SK-N-SH (cell line): ENCODE measurements at regions of chr2 and their contacts with region 1.

Region 1: GRCh38 chr2:27281855-27282559 is at the start of gene TRIM54:
- DNase-seq: no peak
- H3K4me3 ChIP-seq: no peak within 1 kb of the TSS
- H3K27ac ChIP-seq: no peak within 1 kb of the TSS
- H3K4me1 ChIP-seq: peaks cover 0 to 23% of the 10 kb centered on the region in 2 experiments; a peak in 3 of 4 replicates
- H3K27me3 ChIP-seq: peaks cover 12% of the 10 kb centered on the region; the same call in 1 of the 2 replicates
- CTCF ChIP-seq: no peak
- EP300 ChIP-seq: no peak
- RAD21 ChIP-seq: no peak
- polyA plus RNA-seq, gene TRIM54: 0.28 and 0.36 TPM in 2 replicates

Region 2: DNA sequence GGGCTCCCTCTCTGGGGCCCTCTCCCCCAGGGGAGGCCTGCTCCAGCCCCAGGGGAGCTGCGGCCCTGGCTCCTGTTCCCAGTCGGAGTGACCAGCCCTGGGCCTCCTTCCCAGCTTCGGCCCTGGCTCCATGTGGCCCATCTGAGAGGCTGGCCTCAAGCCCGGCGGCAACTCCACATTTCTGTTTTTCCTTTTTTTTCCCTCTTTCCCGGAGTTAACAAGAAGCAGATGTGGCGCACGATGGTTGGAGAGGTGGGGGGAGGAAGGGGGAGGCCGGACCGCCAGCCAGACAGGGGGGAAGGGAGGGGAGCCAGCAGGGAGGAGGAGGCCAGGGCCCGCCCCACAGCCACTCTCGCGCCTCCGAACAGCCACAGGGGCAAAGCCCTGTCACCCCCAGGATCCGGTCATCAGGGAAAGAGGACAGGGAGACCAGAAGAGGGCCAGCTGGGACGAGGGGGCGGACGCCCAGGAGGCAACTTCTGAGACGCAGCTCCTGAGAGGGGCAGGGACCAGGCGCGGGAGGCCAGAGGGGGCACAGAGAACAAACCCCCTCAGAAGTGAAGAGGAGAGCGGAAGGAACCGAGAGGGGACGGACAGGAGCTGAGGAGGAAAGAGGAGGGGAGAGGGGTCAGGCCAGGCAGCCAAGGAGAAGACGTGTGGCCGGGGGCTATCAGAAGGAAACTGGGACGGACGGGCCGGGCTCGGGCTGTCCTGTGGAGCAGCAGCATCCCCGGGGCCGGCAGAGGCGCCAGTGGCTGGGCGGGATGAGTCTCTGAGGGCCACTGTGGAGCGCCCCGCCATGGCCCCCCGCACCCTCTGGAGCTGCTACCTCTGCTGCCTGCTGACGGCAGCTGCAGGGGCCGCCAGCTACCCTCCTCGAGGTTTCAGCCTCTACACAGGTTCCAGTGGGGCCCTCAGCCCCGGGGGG is 203.5 kb before region 1 on chr2 and contains the start of gene EMILIN1:
- CTCF ChIA-PET with region 1: interaction called, 15 read pairs
- POLR2A ChIA-PET with region 1: no interaction called
- DNase-seq: peak; percentile 97
- H3K4me3 ChIP-seq: peak within 1 kb of the TSS; percentile 79 to 93
- H3K27ac ChIP-seq: peak within 1 kb of the TSS; percentile 79 to 99
- H3K4me1 ChIP-seq: peaks cover 36 to 76% of the 10 kb centered on the region in 2 experiments
- H3K27me3 ChIP-seq: no peaks in the 10 kb centered on the region
- CTCF ChIP-seq: peak; percentile 24
- EP300 ChIP-seq: peak; percentile 86 to 91; a peak in 3 of 4 replicates
- RAD21 ChIP-seq: peak; percentile 17
- polyA plus RNA-seq, gene EMILIN1: 184 and 286 TPM in 2 replicates

Region 3: DNA sequence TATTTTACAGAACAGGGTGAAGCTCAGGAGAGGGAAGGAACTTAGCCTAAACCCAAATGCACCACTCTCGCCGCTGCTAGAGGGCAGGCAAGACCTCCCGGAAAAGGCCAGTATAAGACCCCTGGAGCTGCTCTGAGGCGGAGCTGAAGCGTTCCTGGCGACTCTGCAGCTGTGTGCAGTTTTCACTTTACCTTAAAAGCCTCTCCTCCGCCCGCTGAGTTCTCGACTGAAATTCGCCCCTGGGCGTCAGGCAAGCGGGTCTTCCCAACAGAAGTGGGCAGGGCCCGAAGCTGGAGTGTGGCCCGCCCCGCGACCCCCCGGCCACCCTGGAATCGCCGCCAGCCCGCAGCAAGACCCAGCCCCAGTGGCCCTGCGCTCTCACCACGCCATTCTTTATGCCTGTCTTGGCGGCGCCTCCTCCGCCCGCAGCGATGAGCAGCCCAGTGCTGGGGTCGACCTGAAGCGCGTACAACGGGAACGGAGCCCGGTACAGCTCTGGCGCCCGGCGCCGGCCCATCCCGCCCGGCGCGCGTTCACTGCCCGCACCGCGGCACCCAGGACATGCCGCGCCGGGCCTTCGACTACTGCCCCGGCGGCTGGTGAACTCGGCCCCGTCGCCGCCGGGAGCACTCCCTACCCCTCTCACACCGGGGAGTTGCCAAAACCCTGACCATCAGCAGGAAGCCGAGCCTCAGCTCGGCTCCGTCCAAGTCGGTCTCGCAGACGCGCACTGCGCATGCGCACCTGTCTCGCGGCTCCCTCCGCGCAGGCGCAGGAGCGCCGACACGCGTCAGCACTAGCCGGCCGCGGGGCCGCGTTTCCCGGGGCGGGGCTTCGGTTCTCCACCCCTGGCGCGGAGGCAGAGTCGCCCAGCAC is 147.9 kb before region 1 on chr2 and contains the start of gene PREB:
- CTCF ChIA-PET with region 1: interaction called, 29 read pairs
- POLR2A ChIA-PET with region 1: no interaction called
- DNase-seq: peak; percentile 100
- H3K4me3 ChIP-seq: peak within 1 kb of the TSS; percentile 94 to 97
- H3K27ac ChIP-seq: peak within 1 kb of the TSS; percentile 55 to 71; a peak in 3 of 4 replicates
- H3K4me1 ChIP-seq: peaks cover 7 to 14% of the 10 kb centered on the region in 2 experiments; a peak in 3 of 4 replicates
- H3K27me3 ChIP-seq: 0 out of 2 replicates have a peak, but pooled peaks cover 1% of the 10 kb centered on the region
- CTCF ChIP-seq: peak; percentile 56
- EP300 ChIP-seq: no peak
- RAD21 ChIP-seq: peak; percentile 51
- polyA plus RNA-seq, gene PREB: 47.9 and 51.3 TPM in 2 replicates

Region 4: GRCh38 chr2:27191053-27191829 is 90.8 kb before region 1 on chr2:
- CTCF ChIA-PET with region 1: interaction called, 24 read pairs
- POLR2A ChIA-PET with region 1: no interaction called
- DNase-seq: peak; percentile 84
- H3K4me3 ChIP-seq: no peak overlapping the region
- H3K27ac ChIP-seq: no peak overlapping the region
- H3K4me1 ChIP-seq: no peaks in the 10 kb centered on the region
- H3K27me3 ChIP-seq: no peaks in the 10 kb centered on the region
- CTCF ChIP-seq: peak; percentile 95
- EP300 ChIP-seq: 0 out of 4 replicates have a peak, but pooled peaks of 1 of the 2 experiments have one; percentile 20
- RAD21 ChIP-seq: peak; percentile 98

Region 5: DNA sequence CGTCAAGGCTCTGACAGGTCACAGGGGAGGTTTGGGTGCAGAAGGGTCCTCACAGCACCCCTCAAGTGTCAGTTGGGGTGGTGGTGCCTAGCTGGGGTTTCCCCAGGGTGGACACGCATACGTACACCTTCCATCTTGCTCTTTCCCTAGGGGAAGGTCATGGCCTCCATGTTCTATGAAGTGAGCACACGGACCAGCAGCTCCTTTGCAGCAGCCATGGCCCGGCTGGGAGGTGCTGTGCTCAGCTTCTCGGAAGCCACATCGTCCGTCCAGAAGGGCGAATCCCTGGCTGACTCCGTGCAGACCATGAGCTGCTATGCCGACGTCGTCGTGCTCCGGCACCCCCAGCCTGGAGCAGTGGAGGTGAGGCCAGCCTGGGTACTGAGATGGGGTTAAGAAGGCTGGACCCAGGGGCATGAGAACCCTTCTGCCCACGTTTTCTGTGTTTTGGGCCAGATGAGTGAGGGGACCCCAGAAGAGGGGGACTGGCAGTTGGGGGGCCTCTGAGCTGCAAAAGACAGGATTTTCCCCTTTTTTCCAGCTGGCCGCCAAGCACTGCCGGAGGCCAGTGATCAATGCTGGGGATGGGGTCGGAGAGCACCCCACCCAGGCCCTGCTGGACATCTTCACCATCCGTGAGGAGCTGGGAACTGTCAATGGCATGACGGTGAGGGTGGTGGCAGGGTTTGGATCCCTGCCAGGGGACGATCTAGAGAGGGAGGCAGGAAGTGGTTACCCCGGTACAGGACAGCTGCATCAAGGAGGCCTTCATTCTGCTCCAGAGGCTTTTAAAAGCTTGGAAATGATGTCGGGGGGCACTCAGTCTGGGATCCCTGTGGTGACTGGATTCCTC is 40.0 kb before region 1 on chr2:
- CTCF ChIA-PET with region 1: interaction called, 87 read pairs
- POLR2A ChIA-PET with region 1: interaction called, 3 read pairs
- DNase-seq: no peak
- H3K4me3 ChIP-seq: no peak overlapping the region
- H3K27ac ChIP-seq: no peak overlapping the region
- H3K4me1 ChIP-seq: no peaks in the 10 kb centered on the region; a peak in 1 of 4 replicates
- H3K27me3 ChIP-seq: no peaks in the 10 kb centered on the region
- CTCF ChIP-seq: no peak
- EP300 ChIP-seq: no peak
- RAD21 ChIP-seq: no peak

Region 6: DNA sequence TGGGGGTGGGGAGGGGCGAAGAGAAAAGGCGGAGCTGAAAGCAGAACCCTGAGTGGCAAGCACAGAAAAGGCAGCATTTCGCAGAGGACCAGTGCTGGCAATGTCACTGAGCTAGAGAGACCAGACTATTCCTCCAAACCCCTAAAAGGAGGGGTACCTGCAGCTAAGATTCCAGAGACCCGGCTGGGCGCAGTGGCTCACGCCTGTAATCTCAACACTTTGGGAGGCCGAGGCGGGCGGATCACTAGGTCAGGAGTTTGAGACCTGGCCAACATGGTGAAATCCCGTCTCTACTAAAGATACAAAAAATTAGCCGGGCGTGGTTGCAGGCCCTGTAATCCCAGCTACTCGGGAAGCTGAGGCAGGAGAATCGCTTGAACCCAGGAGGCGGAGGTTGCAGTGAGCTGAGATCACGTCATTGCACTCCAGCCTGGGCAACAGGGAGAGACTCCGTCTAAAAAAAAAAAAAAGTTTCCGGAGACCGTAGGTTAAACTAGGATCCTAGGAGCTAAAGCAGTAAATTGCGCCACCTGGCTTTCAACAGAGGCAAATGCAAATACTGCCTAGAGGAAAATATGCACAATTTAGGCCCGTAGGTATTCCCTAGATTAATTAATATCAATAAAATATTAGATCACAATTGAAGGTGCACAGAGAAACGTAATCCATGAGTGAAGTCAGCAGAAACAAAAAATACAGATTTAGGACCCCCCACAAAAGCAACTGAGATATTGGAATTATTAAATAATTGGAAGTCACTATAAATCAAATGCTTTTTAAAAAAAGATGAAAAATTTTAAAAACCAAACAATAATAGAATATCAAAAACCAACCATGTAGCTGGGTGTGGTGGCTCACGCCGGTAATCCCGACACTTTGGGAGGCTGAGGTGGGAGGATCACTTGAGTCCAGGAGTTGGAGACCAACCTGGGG is 21.4 kb after region 1 on chr2:
- CTCF ChIA-PET with region 1: interaction called, 284 read pairs
- POLR2A ChIA-PET with region 1: no interaction called
- DNase-seq: peak; percentile 85
- H3K4me3 ChIP-seq: peak overlapping the region in 1 of 2 experiments; percentile 24; a peak in 1 of 4 replicates
- H3K27ac ChIP-seq: no peak overlapping the region
- H3K4me1 ChIP-seq: peaks cover 0 to 15% of the 10 kb centered on the region in 2 experiments; a peak in 1 of 4 replicates
- H3K27me3 ChIP-seq: peaks cover 15% of the 10 kb centered on the region; the same call in 1 of the 2 replicates
- CTCF ChIP-seq: peak; percentile 99
- EP300 ChIP-seq: no peak
- RAD21 ChIP-seq: peak; percentile 79

Region 7: DNA sequence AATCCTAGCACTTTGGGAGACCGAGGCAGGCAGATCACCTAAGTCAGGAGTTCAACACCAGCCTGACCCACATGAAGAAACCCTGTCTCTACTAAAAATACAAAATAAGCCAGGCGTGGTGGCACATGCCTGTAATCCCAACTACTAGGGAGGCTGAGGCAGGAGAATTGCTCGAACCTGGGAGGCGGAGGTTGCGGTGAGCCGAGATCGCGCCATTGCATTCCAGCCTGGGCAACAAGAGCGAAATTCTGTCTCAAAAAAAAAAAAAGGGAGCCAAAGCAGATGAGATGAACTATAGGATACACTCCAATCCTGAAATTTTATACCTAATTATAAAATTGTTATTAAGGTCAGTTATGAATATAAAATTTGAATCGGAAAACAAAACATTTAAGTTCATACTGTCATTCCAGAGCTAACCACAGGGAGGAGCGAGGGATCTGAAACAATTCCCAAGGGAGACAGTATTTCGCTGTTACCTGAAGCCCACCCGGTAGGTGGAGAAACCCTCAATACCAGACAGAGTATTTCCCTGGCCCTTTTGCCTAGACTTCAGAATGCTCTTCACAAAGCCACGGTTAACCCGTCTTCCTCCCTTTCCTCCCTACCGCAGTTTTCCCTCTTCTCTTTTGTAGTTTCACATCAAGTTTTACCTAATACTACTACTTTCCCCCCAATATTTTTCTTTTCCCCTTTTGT is 125.9 kb after region 1 on chr2:
- CTCF ChIA-PET with region 1: no interaction called
- POLR2A ChIA-PET with region 1: no interaction called
- DNase-seq: peak; percentile 85
- H3K4me3 ChIP-seq: peak overlapping the region; percentile 78 to 98
- H3K27ac ChIP-seq: peak overlapping the region in 1 of 2 experiments; percentile 82; a peak in 2 of 4 replicates
- H3K4me1 ChIP-seq: peaks cover 0 to 6% of the 10 kb centered on the region in 2 experiments; a peak in 2 of 4 replicates
- H3K27me3 ChIP-seq: no peaks in the 10 kb centered on the region
- CTCF ChIP-seq: peak; percentile 79
- EP300 ChIP-seq: no peak
- RAD21 ChIP-seq: peak; percentile 81